ENCODE measurements at regions of chr12 and their contacts with region 1.

Region 1: DNA sequence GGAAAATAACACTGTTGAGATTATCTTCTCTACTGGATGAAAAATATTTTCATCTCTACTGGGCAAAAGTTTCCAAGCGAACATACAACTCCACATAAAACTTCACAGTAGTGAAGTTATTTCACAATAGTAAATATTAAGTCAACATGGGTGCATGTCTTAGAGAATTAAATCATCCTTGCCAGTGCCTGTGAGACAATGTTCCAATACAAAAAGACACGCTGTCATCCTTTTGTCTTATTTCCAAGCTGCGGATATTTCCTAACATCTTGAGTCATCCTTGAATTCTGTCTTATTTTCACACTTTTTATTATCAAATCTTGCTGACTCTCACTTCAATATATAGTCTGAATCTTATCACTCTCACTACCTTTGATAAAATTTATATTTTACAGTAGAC is 142.9 kb upstream of the KITLG start:
- DNase-seq: peak; percentile 26
- H3K27ac ChIP-seq: no peak overlapping the region
- CTCF ChIP-seq: no peak

Region 2: GRCh38 chr12:88628856-88629509 is 94.2 kb before region 1 on chr12:
- CTCF ChIA-PET with region 1: interaction called, 10 read pairs
- POLR2A ChIA-PET with region 1: no interaction called
- DNase-seq: no peak
- H3K27ac ChIP-seq: no peak overlapping the region
- CTCF ChIP-seq: no peak

Measured in RWPE1 (cell line).